Pancreas (tissue), 10 donors: ENCODE measurements at regions of chr14 and their contacts with region 1.

Region 1: DNA sequence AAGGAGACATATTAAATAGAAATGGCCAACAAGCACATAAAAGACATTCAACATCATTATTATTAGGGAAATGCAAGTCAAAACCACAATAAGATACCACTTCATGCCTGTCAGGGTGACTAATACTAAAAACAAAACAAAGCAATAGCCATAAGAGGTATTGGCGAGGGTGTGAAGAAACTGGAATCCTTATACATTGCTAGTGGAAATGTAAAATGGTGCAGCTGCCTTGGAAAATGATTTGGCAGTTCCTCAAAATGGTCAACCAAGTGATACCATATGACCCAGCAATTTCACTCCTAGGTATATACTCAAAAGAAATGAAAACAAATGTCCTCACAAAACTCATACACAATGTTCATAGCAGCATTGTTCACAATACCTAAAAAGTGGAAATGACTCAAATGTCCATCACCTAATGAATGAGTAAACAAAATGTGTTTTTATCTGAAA is 27.0 kb downstream of the GPR135 start:
- DNase-seq: no peak
- ATAC-seq: no peak
- H3K4me3 ChIP-seq: no peak overlapping the region
- H3K27ac ChIP-seq: no peak overlapping the region
- H3K4me1 ChIP-seq: no peaks in the 10 kb centered on the region
- H3K27me3 ChIP-seq: peaks cover 0 to 4% (median 0%) of the 10 kb centered on the region in 4 donors
- CTCF ChIP-seq: no peak

Region 2: GRCh38 chr14:59126710-59127432 is 311.4 kb before region 1 on chr14:
- intact Hi-C with region 1: loop called in 2 of 3 experiments (anchors 2 to 5 kb)
- DNase-seq: peak in 1 of 6 donors; percentile 40
- ATAC-seq: peak; percentile 84 to 96 (median 94)
- H3K4me3 ChIP-seq: no peak overlapping the region
- H3K27ac ChIP-seq: no peak overlapping the region
- H3K4me1 ChIP-seq: no peaks in the 10 kb centered on the region
- H3K27me3 ChIP-seq: peaks cover 0 to 8% (median 3%) of the 10 kb centered on the region in 4 donors
- CTCF ChIP-seq: peak; percentile 58 to 79 (median 68)

Region 3: DNA sequence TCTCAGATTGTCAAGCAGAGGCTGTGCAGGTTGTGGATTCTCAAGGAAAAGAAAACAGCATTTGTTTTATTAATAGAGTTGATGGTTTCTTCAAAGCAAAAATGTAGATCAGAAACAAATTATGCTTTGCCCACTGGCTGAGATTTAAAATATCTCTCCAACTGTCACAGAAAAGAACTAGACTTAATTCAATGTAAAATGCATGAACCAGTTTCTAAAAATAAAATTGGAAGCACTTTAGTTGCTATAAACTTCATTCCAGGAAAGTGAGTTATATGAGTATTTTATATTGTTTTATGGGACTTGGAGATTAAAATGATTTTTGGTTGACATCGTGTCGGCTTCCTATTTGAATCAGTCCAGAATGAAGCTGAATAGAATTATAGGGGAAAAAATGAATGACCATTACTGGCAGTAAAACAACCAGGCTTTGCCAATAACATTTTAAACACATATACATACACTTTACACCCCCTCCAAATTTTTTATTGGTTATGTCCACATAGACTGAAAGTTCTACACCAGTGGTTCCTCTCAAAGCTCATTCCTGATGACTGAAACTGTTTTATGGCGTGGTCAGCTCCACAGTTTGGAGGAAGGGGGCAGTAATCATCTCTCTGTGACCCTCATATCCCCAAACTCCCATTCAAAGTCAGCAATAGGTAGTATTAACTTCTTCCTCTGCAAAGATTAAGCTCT is 305.3 kb before region 1 on chr14:
- intact Hi-C with region 1: loop called in 1 of 3 experiments (anchors 5 kb)
- DNase-seq: no peak
- ATAC-seq: no peak
- H3K4me3 ChIP-seq: no peak overlapping the region
- H3K27ac ChIP-seq: no peak overlapping the region
- H3K4me1 ChIP-seq: no peaks in the 10 kb centered on the region
- H3K27me3 ChIP-seq: no peaks in the 10 kb centered on the region
- CTCF ChIP-seq: no peak

Region 4: GRCh38 chr14:59275653-59276052 is 162.6 kb before region 1 on chr14:
- intact Hi-C with region 1: no loop called
- DNase-seq: no peak
- ATAC-seq: peak; percentile 86 to 93 (median 87)
- H3K4me3 ChIP-seq: no peak overlapping the region
- H3K27ac ChIP-seq: peak overlapping the region in 2 of 4 donors; percentile 51 to 59
- H3K4me1 ChIP-seq: peaks cover 0 to 14% (median 11%) of the 10 kb centered on the region in 3 donors
- H3K27me3 ChIP-seq: no peaks in the 10 kb centered on the region
- CTCF ChIP-seq: no peak

Region 5: GRCh38 chr14:60226298-60226697 is 788.1 kb after region 1 on chr14:
- intact Hi-C with region 1: no loop called
- DNase-seq: no peak
- ATAC-seq: no peak
- H3K4me3 ChIP-seq: no peak overlapping the region
- H3K27ac ChIP-seq: no peak overlapping the region
- H3K4me1 ChIP-seq: no peaks in the 10 kb centered on the region
- H3K27me3 ChIP-seq: no peaks in the 10 kb centered on the region
- CTCF ChIP-seq: no peak